T-cell (primary cell): ENCODE measurements at regions of chr15 and their contacts with region 1.

Region 1: DNA sequence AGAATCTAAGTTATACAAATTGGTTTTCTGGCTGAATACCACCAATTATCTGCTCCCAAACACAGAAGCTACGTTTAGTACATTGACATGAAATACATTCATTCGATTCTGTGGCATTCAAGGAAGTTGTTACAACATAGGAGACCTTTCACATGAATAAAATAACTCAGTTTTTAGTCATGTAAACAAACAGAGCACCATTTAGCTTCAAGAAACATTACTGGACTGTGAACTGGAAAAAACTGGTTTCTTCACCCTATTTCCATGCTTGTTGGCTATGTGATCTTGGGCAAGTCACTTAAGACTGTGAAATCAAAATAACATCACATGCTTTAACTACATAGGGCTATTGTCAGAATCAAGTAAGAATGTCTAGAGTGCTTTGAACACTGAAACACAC is 46.2 kb downstream of the NRG4 start:
- DNase-seq: no peak
- ATAC-seq: no peak
- H3K4me3 ChIP-seq: no peak overlapping the region
- H3K4me3 Mint-ChIP-seq: no peak overlapping the region
- H3K27ac ChIP-seq: no peak overlapping the region
- H3K27ac Mint-ChIP-seq: no peak overlapping the region
- H3K4me1 ChIP-seq: no peaks in the 10 kb centered on the region
- H3K4me1 Mint-ChIP-seq: no peaks in the 10 kb centered on the region
- H3K27me3 ChIP-seq: peaks cover 0 to 2% of the 10 kb centered on the region in 2 experiments
- H3K27me3 Mint-ChIP-seq: peaks cover 5 to 12% of the 10 kb centered on the region in 2 donors

Region 2: GRCh38 chr15:76057332-76058000 is 91.4 kb after region 1 on chr15:
- CTCF ChIA-PET with region 1: interaction called in 1 of 2 experiments, 10 read pairs
- POLR2A ChIA-PET with region 1: no interaction called
- DNase-seq: peak in 17 of 35 experiments; percentile 10 to 73 (median 31)
- ATAC-seq: peak in 1 of 4 experiments; percentile 34
- H3K4me3 ChIP-seq: no peak overlapping the region
- H3K4me3 Mint-ChIP-seq: peak overlapping the region in 1 of 3 donors; percentile 17
- H3K27ac ChIP-seq: no peak overlapping the region
- H3K27ac Mint-ChIP-seq: no peak overlapping the region
- H3K4me1 ChIP-seq: peaks cover 14 to 18% of the 10 kb centered on the region in 2 experiments
- H3K4me1 Mint-ChIP-seq: peaks cover 21 to 32% (median 23%) of the 10 kb centered on the region in 3 donors
- H3K27me3 ChIP-seq: peaks cover 14 to 38% of the 10 kb centered on the region in 2 experiments
- H3K27me3 Mint-ChIP-seq: peaks cover 47 to 58% of the 10 kb centered on the region in 2 donors